Posterior cingulate gyrus (tissue), 11 donors: ENCODE measurements at regions of chr16 and their contacts with region 1.

Region 1: GRCh38 chr16:58129097-58129936 is at the start of gene CFAP20:
- DNase-seq: peak; percentile 95 to 100 (median 97)

Region 2: GRCh38 chr16:57899771-57900661 is 229.3 kb before region 1 on chr16:
- intact Hi-C with region 1: loop called (anchors 5 kb)
- DNase-seq: peak; percentile 61 to 97 (median 82)

Region 3: DNA sequence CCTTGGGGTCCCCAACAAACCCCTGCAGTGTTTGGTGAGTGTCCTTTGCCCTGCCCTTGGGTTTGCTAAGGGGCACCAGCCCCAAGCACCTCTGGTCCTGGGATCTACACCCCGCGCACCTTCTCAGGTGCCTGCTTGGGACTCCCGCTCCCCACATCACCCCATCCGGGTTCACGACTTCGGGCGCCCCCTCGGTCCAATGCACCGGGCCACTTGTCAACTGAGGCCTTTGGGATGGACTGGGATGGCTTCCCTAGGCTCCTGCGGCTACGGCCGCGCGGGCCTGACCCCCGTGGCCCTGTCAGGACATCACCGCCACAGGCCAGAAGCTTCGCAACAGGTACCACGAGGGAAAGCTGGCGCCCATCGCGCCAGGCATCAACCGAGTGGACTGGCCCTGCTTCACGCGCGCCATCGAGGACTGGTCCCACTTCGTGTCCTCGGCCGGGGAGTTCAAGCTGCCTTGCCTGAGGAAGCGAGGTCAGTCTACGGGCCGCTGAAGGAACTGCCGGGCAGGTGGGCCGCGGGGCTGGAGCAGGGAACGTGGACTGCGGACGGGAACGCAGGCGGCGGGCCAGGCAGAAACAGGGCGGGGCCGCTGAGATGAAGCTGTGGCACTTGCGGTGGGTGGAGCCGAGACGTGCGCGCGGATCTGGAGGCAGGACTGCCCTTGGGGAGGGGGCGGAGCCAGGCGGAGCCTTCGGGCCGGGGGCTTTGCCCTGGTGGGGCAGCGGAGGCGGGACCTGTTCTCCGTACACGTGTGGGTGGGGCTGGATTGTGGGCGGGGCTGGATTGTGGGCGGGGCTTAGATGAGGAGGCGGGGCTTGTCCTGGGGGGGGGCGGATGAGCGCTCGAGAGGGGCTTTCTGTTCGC is 144.8 kb before region 1 on chr16:
- intact Hi-C with region 1: no loop called
- DNase-seq: peak in 8 of 10 donors; percentile 38 to 92 (median 54)

Region 4: DNA sequence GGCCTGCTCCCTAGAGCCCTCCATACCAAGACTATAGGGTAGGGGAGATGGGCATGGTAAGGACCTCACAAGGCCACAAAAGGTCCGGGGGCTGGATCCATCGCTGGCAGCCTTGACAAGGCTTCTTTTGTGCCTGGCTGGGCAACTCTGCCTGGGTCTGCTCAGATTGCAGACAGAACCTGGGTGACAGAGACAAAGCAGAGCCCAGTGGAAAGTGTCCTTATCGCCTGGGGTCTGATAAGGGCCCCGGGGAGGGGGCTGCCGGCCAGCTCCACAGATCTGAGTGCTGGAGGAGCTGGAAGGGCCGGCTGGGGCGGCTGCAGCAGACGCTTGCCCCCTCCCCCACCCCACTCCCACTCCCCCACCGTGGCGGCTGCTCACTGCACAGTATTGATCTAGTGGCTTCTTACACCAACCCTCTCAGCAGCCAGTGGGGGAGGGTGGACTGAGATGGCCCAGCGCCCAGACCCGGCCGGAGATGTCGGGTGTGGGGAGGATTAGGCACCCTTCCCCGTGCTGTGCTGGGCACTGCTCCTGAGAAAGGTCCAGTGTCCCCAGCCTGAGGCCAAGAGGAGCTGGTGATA is 96.5 kb before region 1 on chr16:
- intact Hi-C with region 1: no loop called
- DNase-seq: peak; percentile 40 to 92 (median 63)

Region 5: GRCh38 chr16:58077853-58078252 is 51.5 kb before region 1 on chr16:
- intact Hi-C with region 1: no loop called
- DNase-seq: peak in 2 of 10 donors; percentile 12 to 29

Region 6: DNA sequence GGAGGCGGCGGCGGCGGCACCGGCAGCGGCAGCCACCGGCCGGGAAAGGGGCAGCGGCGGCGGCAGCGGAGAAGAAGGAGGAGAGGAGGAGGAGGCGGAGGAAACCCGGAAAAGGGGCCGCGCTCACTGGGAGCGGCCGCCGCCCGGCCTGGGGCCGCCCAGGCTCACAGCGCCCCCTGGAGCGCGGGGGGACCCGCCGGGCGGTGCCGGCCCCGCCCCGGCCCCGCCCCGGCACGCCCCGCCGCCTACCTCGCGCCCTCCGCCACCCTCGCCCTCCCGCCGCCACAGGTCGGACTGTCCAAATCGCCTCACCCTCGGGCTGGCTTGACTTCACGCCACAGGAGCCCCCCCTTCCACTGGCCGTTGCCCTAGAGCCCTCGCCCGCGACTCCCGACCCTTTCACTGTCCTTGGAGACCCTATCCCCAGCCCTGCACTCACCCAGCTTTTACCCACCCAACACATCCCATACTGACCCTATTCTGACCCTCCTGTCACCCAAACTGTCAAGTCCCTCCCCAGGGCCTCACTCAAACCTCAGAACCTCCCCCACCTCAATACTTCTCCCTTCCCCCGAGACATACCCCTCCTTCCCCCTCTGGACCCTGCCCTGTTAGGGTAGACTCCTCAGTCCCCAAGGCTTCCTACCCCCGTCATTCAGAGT is 68.8 kb after region 1 on chr16 and contains the start of gene CSNK2A2:
- intact Hi-C with region 1: loop called (anchors 5 kb)
- DNase-seq: peak; percentile 38 to 93 (median 60)